K562 (cell line): ENCODE measurements at regions of chr1 and their contacts with region 1.

Region 1: GRCh38 chr1:26363549-26364448 is 8.8 kb downstream of the ZNF683 start:
- DNase-seq: peak; percentile 88 to 95 (median 90)
- ATAC-seq: peak; percentile 96
- H3K4me3 ChIP-seq: no peak overlapping the region
- H3K27ac ChIP-seq: no peak overlapping the region
- H3K4me1 ChIP-seq: peaks cover 4 to 34% of the 10 kb centered on the region in 2 experiments; a peak in 4 of 5 replicates
- H3K27me3 ChIP-seq: no peaks in the 10 kb centered on the region; a peak in 1 of 5 replicates
- CTCF ChIP-seq: peak; percentile 97 to 100 (median 99)
- EP300 ChIP-seq: 0 out of 2 replicates have a peak, but pooled peaks have one; percentile 29
- POLR2A ChIP-seq: no peak
- RAD21 ChIP-seq: peak; percentile 89 to 98

Region 2: GRCh38 chr1:26279456-26280332 is 84.1 kb before region 1 on chr1 and contains the start of gene SH3BGRL3:
- CTCF ChIA-PET with region 1: interaction called, 20 read pairs
- POLR2A ChIA-PET with region 1: interaction called, 3 read pairs
- in situ Hi-C with region 1: no loop called
- intact Hi-C with region 1: no loop called
- DNase-seq: peak; percentile 93 to 96 (median 96)
- ATAC-seq: peak; percentile 87
- H3K4me3 ChIP-seq: peak within 1 kb of the TSS; percentile 47
- H3K27ac ChIP-seq: peak within 1 kb of the TSS; percentile 81
- H3K4me1 ChIP-seq: peaks cover 81 to 83% of the 10 kb centered on the region in 2 experiments
- H3K27me3 ChIP-seq: no peaks in the 10 kb centered on the region
- CTCF ChIP-seq: peak; percentile 66 to 83 (median 69)
- EP300 ChIP-seq: peak; percentile 13; the same call in 1 of the 2 replicates
- POLR2A ChIP-seq: peak; percentile 84
- RAD21 ChIP-seq: peak; percentile 35 to 40; a peak in 2 of 4 replicates
- polyA plus RNA-seq, gene SH3BGRL3: 106 to 137 TPM

Region 3: GRCh38 chr1:26284597-26285360 is 79.0 kb before region 1 on chr1:
- CTCF ChIA-PET with region 1: interaction called, 20 read pairs
- POLR2A ChIA-PET with region 1: interaction called, 4 read pairs
- in situ Hi-C with region 1: no loop called
- intact Hi-C with region 1: loop called (anchors 1 kb)
- DNase-seq: peak; percentile 91 to 99 (median 93)
- ATAC-seq: peak; percentile 73
- H3K4me3 ChIP-seq: no peak overlapping the region
- H3K27ac ChIP-seq: peak overlapping the region; percentile 86
- H3K4me1 ChIP-seq: peaks cover 84 to 99% of the 10 kb centered on the region in 2 experiments
- H3K27me3 ChIP-seq: no peaks in the 10 kb centered on the region
- CTCF ChIP-seq: peak; percentile 89 to 97 (median 92)
- EP300 ChIP-seq: peak; percentile 91
- POLR2A ChIP-seq: peak; percentile 27; the same call in 1 of the 2 replicates
- RAD21 ChIP-seq: peak; percentile 79 to 92

Region 4: DNA sequence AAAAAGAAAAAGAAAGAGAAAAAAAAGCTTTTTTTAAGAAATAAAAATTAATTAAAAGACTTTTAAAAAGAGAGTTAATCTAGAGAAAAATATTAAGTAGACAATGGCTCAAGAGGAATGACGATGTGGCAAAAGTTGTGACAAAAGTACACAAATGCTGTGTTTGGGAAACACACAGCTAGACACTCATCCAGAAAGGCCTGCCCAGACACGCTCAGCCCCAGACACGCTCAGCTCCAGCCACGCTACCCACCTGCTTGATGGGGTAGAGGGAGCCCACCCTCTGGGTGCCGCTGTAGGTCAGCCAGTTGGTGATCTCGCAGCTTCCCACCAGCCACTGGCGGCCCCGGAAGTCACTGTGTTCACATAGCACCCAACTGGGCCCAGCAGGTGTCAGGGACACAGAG is 35.8 kb before region 1 on chr1:
- CTCF ChIA-PET with region 1: no interaction called
- POLR2A ChIA-PET with region 1: interaction called, 4 read pairs
- in situ Hi-C with region 1: no loop called
- intact Hi-C with region 1: loop called (anchors 2 kb)
- DNase-seq: peak in 1 of 4 experiments; percentile 45
- ATAC-seq: peak; percentile 54
- H3K4me3 ChIP-seq: no peak overlapping the region
- H3K27ac ChIP-seq: no peak overlapping the region
- H3K4me1 ChIP-seq: peaks cover 2 to 13% of the 10 kb centered on the region in 2 experiments; a peak in 3 of 5 replicates
- H3K27me3 ChIP-seq: no peaks in the 10 kb centered on the region
- CTCF ChIP-seq: peak; percentile 33 to 46 (median 36); a peak in 4 of 6 replicates
- EP300 ChIP-seq: no peak
- POLR2A ChIP-seq: no peak
- RAD21 ChIP-seq: peak in 1 of 2 experiments; percentile 31; a peak in 2 of 4 replicates

Region 5: DNA sequence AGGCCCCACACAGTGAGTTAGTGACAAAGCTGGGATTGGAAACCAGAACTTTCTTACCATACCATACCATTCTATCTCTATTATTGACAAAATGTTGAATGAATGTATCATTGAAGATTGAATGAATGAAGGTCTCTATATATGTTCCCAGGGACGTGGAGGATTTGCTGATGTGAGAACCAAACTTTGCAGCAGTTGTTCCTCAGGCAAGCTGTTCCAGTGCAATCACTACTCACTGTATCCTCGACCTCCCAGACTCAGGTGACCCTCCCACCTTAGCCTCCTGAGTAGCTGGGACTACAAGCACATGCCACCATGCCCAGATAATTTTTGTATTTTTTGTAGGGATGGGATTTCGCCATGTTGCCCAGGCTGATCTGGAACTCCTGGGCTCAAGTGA is 35.2 kb after region 1 on chr1:
- CTCF ChIA-PET with region 1: no interaction called
- POLR2A ChIA-PET with region 1: no interaction called
- in situ Hi-C with region 1: no loop called
- intact Hi-C with region 1: no loop called
- DNase-seq: no peak
- ATAC-seq: no peak
- H3K4me3 ChIP-seq: no peak overlapping the region
- H3K27ac ChIP-seq: no peak overlapping the region
- H3K4me1 ChIP-seq: peaks cover 0 to 3% of the 10 kb centered on the region in 2 experiments; a peak in 2 of 5 replicates
- H3K27me3 ChIP-seq: peaks cover 4 to 11% of the 10 kb centered on the region in 2 experiments; a peak in 3 of 5 replicates
- CTCF ChIP-seq: no peak
- EP300 ChIP-seq: no peak
- POLR2A ChIP-seq: no peak
- RAD21 ChIP-seq: no peak